Endothelial cell of umbilical vein (primary cell): ENCODE measurements at regions of chr16 and their contacts with region 1.

Region 1: GRCh38 chr16:82229796-82230619 is 60.0 kb upstream of the MPHOSPH6 start:
- DNase-seq: peak; percentile 76
- H3K4me3 ChIP-seq: no peak overlapping the region
- H3K27ac ChIP-seq: no peak overlapping the region
- H3K4me1 ChIP-seq: no peaks in the 10 kb centered on the region
- H3K27me3 ChIP-seq: peaks cover 9 to 18% of the 10 kb centered on the region in 2 experiments
- CTCF ChIP-seq: peak; percentile 88 to 92
- POLR2A ChIP-seq: no peak

Region 2: DNA sequence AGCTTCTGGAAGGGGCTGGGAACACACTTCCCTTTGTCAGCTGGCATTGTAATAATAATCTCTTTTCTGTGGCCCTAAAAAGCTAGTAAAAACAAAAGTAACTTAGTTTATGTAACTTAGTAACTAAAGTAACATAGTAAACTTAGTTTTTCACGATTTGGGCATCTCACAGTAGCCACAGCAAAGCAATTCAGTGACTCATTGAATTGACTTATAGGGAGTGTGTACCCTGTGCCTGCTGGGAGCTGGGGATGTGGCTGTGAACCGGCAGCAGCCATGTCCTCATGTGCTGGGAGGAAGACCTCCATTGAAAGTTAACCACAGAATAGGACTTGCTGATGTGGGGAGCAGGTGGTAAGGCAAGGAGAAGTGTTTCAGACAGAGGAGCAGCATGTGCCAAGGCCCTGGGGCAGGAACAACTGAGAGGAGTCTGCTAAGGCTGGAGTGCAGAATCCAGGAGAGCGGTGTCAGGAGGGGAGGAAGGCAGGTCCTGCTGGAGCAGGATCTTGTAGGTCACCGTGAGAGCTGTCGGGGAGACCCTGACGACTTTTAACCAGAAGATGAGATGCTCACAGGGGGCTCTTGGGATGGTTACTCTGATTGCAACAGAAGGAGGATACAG is 338.2 kb before region 1 on chr16:
- CTCF ChIA-PET with region 1: interaction called, 59 read pairs
- POLR2A ChIA-PET with region 1: no interaction called
- dilution Hi-C with region 1: no loop called
- intact Hi-C with region 1: loop called (anchors 1 kb)
- DNase-seq: no peak
- H3K4me3 ChIP-seq: no peak overlapping the region
- H3K27ac ChIP-seq: no peak overlapping the region
- H3K4me1 ChIP-seq: peaks cover 4% of the 10 kb centered on the region
- H3K27me3 ChIP-seq: no peaks in the 10 kb centered on the region
- CTCF ChIP-seq: no peak
- POLR2A ChIP-seq: no peak

Region 3: DNA sequence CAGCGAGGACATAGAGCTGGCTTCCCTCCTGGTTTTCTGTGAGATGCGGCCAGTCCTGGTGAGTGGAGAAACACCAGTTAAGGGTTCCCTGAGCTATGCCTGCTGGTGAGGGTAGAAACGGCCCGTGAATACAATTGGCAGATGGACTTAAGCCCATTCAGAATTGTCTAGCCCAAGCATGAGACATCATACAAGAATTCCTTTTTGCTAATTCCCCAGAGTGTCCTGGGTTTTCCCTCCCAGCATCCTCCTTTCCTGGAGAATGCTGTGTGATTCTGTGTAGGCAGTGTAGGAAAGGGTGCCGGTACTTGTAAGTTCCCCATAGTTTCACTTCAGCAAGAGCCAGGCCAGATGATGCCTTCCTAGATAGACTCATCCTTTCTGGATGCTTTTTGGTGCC is 283.8 kb before region 1 on chr16:
- CTCF ChIA-PET with region 1: interaction called, 171 read pairs
- POLR2A ChIA-PET with region 1: no interaction called
- dilution Hi-C with region 1: no loop called
- intact Hi-C with region 1: loop called (anchors 1 kb)
- DNase-seq: no peak
- H3K4me3 ChIP-seq: no peak overlapping the region
- H3K27ac ChIP-seq: no peak overlapping the region
- H3K4me1 ChIP-seq: no peaks in the 10 kb centered on the region
- H3K27me3 ChIP-seq: no peaks in the 10 kb centered on the region
- CTCF ChIP-seq: no peak
- POLR2A ChIP-seq: no peak

Region 4: GRCh38 chr16:82004631-82005490 is 225.1 kb before region 1 on chr16:
- CTCF ChIA-PET with region 1: no interaction called
- POLR2A ChIA-PET with region 1: no interaction called
- dilution Hi-C with region 1: no loop called
- intact Hi-C with region 1: no loop called
- DNase-seq: peak; percentile 44
- H3K4me3 ChIP-seq: no peak overlapping the region
- H3K27ac ChIP-seq: peak overlapping the region; percentile 5
- H3K4me1 ChIP-seq: peaks cover 12% of the 10 kb centered on the region
- H3K27me3 ChIP-seq: no peaks in the 10 kb centered on the region
- CTCF ChIP-seq: no peak
- POLR2A ChIP-seq: no peak

Region 5: GRCh38 chr16:82031116-82032084 is 198.6 kb before region 1 on chr16:
- CTCF ChIA-PET with region 1: interaction called, 19 read pairs
- POLR2A ChIA-PET with region 1: no interaction called
- dilution Hi-C with region 1: no loop called
- intact Hi-C with region 1: loop called (anchors 1 kb)
- DNase-seq: peak; percentile 44
- H3K4me3 ChIP-seq: no peak overlapping the region
- H3K27ac ChIP-seq: peak overlapping the region; percentile 1
- H3K4me1 ChIP-seq: peaks cover 32% of the 10 kb centered on the region
- H3K27me3 ChIP-seq: peaks cover 0 to under 1% of the 10 kb centered on the region in 2 experiments
- CTCF ChIP-seq: peak; percentile 28 to 33
- POLR2A ChIP-seq: no peak

Region 6: DNA sequence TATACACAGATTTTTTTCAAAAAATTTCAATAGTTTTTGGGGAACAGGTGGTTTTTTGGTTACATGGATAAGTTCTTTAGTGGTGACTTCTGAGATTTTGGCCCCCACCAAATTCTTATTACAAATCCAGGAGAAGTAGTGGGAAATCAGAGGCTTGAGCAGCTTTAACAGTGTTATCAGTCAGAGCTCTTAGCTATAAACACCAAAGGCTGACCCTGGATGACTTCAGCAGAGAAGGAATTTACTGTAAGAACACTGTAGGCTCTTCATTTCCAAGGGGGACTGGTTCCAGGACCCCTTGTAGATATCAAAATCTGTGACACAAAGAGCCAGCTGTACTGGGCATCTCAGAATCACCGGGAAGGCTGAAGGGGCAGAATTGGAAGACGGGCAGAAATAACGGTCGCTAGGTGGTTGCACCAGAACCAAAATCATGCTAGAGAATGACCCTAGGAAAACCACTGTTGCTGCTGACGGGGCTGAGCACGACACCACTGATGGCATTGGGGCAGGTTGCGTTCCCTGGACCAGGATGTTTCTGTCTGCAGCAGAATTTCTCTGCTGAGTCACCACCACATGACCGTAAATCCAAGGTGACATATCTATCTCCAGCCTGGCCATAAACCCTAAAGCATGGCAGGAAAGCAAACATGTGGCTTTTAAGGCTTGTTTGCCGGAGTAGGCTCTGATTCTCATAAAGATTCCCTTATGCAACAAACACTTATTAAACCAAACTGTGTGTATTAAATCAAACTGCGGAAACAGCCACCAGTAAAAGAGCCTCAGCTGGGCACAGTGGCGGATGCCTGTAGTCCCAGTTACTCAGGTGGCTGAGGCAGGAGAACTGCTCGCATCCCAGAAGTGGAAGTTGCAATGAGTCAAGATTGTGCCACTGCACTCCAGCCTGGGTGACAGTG is 77.6 kb before region 1 on chr16:
- CTCF ChIA-PET with region 1: interaction called, 14 read pairs
- POLR2A ChIA-PET with region 1: no interaction called
- dilution Hi-C with region 1: no loop called
- intact Hi-C with region 1: no loop called
- DNase-seq: no peak
- H3K4me3 ChIP-seq: no peak overlapping the region
- H3K27ac ChIP-seq: no peak overlapping the region
- H3K4me1 ChIP-seq: no peaks in the 10 kb centered on the region
- H3K27me3 ChIP-seq: no peaks in the 10 kb centered on the region
- CTCF ChIP-seq: no peak
- POLR2A ChIP-seq: no peak

Region 7: DNA sequence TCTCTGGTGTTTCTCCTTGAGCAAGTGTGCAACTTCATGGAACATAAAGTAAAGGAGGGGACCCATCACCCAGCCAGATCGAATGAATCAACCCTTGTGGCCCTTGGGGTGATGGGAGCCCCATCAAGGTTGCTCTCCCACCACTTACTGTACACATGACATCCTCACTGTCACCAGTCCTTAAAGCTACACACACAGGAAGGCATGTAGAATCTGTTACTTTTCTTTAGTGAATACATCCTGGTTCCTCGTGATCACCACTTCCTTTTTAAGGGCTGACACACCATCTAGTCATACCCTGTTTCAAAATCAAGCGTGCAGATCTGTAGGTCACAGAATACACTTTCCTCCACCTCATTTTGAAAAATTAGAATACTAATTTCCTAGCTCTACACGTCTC is 37.3 kb before region 1 on chr16:
- CTCF ChIA-PET with region 1: interaction called, 11 read pairs
- POLR2A ChIA-PET with region 1: no interaction called
- dilution Hi-C with region 1: no loop called
- intact Hi-C with region 1: no loop called
- DNase-seq: peak; percentile 86
- H3K4me3 ChIP-seq: no peak overlapping the region
- H3K27ac ChIP-seq: peak overlapping the region; percentile 59
- H3K4me1 ChIP-seq: peaks cover 30% of the 10 kb centered on the region
- H3K27me3 ChIP-seq: no peaks in the 10 kb centered on the region
- CTCF ChIP-seq: no peak
- POLR2A ChIP-seq: peak; percentile 56